ENCODE measurements at regions of chr14 and their contacts with region 1.

Region 1: GRCh38 chr14:77151918-77152588 is 10.5 kb upstream of the ZDHHC22 start:
- DNase-seq: peak in 3 of 9 donors; percentile 9 to 18 (median 10)
- ATAC-seq: peak; percentile 57
- H3K4me3 ChIP-seq: no peak overlapping the region
- H3K4me3 Mint-ChIP-seq: no peak overlapping the region
- H3K27ac ChIP-seq: no peak overlapping the region
- H3K27ac Mint-ChIP-seq: no peak overlapping the region
- H3K4me1 ChIP-seq: no peaks in the 10 kb centered on the region
- H3K4me1 Mint-ChIP-seq: no peaks in the 10 kb centered on the region
- H3K27me3 ChIP-seq: peaks cover 0 to 9% of the 10 kb centered on the region in 2 donors
- H3K27me3 Mint-ChIP-seq: peaks cover 35 to 55% (median 46%) of the 10 kb centered on the region in 5 donors

Region 2: GRCh38 chr14:77186911-77187648 is 35.0 kb after region 1 on chr14:
- CTCF ChIA-PET with region 1: no interaction called
- POLR2A ChIA-PET with region 1: no interaction called
- intact Hi-C with region 1: no loop called
- DNase-seq: no peak
- ATAC-seq: no peak
- H3K4me3 ChIP-seq: no peak overlapping the region
- H3K4me3 Mint-ChIP-seq: no peak overlapping the region
- H3K27ac ChIP-seq: no peak overlapping the region
- H3K27ac Mint-ChIP-seq: no peak overlapping the region
- H3K4me1 ChIP-seq: peaks cover 8 to 9% of the 10 kb centered on the region in 2 donors
- H3K4me1 Mint-ChIP-seq: peaks cover 0 to 15% (median 8%) of the 10 kb centered on the region in 7 donors
- H3K27me3 ChIP-seq: peaks cover 0 to under 1% of the 10 kb centered on the region in 2 donors
- H3K27me3 Mint-ChIP-seq: peaks cover 29 to 54% (median 38%) of the 10 kb centered on the region in 5 donors

Region 3: GRCh38 chr14:77554207-77554606 is 402.2 kb after region 1 on chr14:
- CTCF ChIA-PET with region 1: no interaction called
- POLR2A ChIA-PET with region 1: no interaction called
- intact Hi-C with region 1: loop called in 1 of 2 experiments (anchors 2 kb)
- DNase-seq: no peak
- ATAC-seq: peak; percentile 40
- H3K4me3 ChIP-seq: no peak overlapping the region
- H3K4me3 Mint-ChIP-seq: peak overlapping the region in 1 of 10 donors; percentile 77
- H3K27ac ChIP-seq: no peak overlapping the region
- H3K27ac Mint-ChIP-seq: peak overlapping the region in 4 of 9 donors; percentile 2 to 89 (median 26)
- H3K4me1 ChIP-seq: no peaks in the 10 kb centered on the region
- H3K4me1 Mint-ChIP-seq: peaks cover 0 to 27% (median 6%) of the 10 kb centered on the region in 7 donors
- H3K27me3 ChIP-seq: no peaks in the 10 kb centered on the region
- H3K27me3 Mint-ChIP-seq: no peaks in the 10 kb centered on the region

Measured in naive thymus-derived CD4-positive, alpha-beta T cell (primary cell).